ENCODE measurements at regions of chr13 and their contacts with region 1.

Region 1: DNA sequence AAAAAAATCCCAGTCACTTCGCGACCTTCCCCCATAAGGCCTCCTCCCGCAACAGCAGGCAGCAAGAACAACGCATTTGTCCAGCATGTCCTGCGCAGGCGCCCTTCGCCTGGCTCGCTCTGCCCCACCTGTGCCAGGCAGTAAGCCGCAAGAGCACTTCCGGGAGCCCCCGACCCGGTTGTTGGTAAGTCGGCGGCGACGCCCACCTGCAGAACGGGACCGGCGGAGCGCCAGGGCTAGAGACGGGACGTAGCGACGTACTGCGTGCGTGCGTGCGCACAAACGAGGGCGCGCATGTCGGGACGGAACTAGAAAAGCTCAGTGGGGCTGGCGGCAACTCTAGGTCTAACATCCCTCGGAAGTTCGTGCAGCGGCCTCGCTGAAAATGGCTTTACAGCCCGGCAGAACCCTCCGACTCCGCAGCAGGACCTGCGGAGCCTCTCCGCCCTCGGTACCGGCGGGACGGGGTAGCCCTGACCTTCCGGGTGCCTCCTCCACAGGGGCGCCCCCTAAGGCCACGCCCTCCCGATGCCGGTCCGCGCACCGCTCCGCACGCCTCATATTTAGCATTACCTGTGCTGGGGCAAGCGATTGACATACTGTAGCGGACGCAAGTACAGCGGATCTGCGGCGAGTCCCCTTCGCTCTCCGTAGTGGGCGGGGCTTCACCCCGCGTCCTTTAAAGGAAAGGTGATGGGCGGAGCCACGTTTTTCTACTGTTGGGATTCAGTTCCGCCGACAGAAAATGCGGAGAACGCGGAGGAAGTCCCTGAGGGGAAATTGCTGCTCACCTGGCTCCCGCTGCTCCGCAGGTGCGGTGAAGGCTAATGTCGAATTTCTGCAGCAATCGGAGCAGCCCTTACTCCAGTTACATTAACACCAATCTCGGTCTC is at the start of gene MTIF3:
- DNase-seq: peak; percentile 90
- ATAC-seq: peak; percentile 96
- H3K4me3 ChIP-seq: peak within 1 kb of the TSS; percentile 74
- H3K27ac ChIP-seq: peak within 1 kb of the TSS; percentile 89
- H3K4me1 ChIP-seq: peaks cover 4% of the 10 kb centered on the region
- H3K27me3 ChIP-seq: no peaks in the 10 kb centered on the region
- CTCF ChIP-seq: no peak
- POLR2A ChIP-seq: peak; percentile 56
- RAD21 ChIP-seq: no peak
- total RNA-seq, gene MTIF3: 31.7 and 60.8 TPM in 2 replicates

Region 2: GRCh38 chr13:27424246-27425157 is 25.7 kb before region 1 on chr13 and contains the start of gene GTF3A:
- CTCF ChIA-PET with region 1: interaction called, 3 read pairs
- POLR2A ChIA-PET with region 1: no interaction called
- dilution Hi-C with region 1: no loop called
- in situ Hi-C with region 1: no loop called
- intact Hi-C with region 1: loop called (anchors 1 kb)
- DNase-seq: peak; percentile 82
- ATAC-seq: peak; percentile 92
- H3K4me3 ChIP-seq: peak within 1 kb of the TSS; percentile 57
- H3K27ac ChIP-seq: peak within 1 kb of the TSS; percentile 81
- H3K4me1 ChIP-seq: peaks cover 15% of the 10 kb centered on the region
- H3K27me3 ChIP-seq: peaks cover 2% of the 10 kb centered on the region; the same call in 1 of the 2 replicates
- CTCF ChIP-seq: no peak
- POLR2A ChIP-seq: peak; percentile 51; the same call in 1 of the 2 replicates
- RAD21 ChIP-seq: no peak
- total RNA-seq, gene GTF3A: 116 and 148 TPM in 2 replicates

Region 3: DNA sequence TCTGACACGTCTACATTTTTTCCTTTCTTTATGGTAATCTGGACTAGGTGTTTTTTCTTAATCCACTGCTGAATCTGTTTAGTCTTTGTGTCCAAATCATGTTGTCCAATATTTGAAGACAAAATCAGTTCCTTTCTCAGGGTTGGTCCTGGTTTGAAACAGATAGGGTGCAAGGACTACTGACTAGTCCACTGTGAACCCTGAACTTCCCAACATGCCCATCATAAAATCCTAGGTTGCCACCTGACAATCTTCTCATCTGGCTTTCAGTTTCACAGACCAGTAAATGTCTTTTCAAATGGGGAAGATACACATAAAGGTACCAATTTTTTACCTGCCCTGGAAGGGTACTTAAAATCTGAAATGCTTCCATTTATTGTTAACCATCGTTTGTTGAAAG is 13.1 kb before region 1 on chr13:
- CTCF ChIA-PET with region 1: no interaction called
- POLR2A ChIA-PET with region 1: no interaction called
- dilution Hi-C with region 1: no loop called
- in situ Hi-C with region 1: no loop called
- intact Hi-C with region 1: no loop called
- DNase-seq: no peak
- ATAC-seq: no peak
- H3K4me3 ChIP-seq: no peak overlapping the region
- H3K27ac ChIP-seq: no peak overlapping the region
- H3K4me1 ChIP-seq: no peaks in the 10 kb centered on the region
- H3K27me3 ChIP-seq: no peaks in the 10 kb centered on the region
- CTCF ChIP-seq: no peak
- POLR2A ChIP-seq: no peak
- RAD21 ChIP-seq: no peak

Region 4: DNA sequence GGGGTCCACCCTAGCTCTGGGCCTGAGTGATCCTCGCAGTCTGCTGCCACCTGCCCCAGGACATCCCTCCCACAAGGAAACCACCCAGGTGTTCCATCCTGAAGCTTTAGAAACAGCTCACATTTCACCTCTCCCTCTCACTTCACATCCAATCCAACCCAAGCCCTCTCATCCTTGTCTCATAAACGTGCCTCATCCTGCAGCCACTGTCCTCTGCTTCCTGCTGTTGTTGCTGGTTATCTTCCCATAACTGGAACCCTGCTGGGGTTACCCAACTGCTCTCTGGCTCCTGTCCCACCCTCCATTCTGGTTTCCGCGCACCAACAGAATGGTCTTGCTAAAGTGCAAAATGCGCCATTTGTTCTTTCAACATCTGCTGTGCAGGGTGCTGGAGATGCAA is 59.9 kb after region 1 on chr13:
- CTCF ChIA-PET with region 1: no interaction called
- POLR2A ChIA-PET with region 1: no interaction called
- dilution Hi-C with region 1: no loop called
- in situ Hi-C with region 1: loop called (anchors 10 kb)
- intact Hi-C with region 1: no loop called
- DNase-seq: no peak
- ATAC-seq: no peak
- H3K4me3 ChIP-seq: no peak overlapping the region
- H3K27ac ChIP-seq: no peak overlapping the region
- H3K4me1 ChIP-seq: no peaks in the 10 kb centered on the region
- H3K27me3 ChIP-seq: peaks cover 5% of the 10 kb centered on the region; the same call in 1 of the 2 replicates
- CTCF ChIP-seq: no peak
- POLR2A ChIP-seq: no peak
- RAD21 ChIP-seq: no peak

Region 5: GRCh38 chr13:27933580-27934328 is 483.6 kb after region 1 on chr13:
- CTCF ChIA-PET with region 1: no interaction called
- POLR2A ChIA-PET with region 1: interaction called, 15 read pairs
- dilution Hi-C with region 1: no loop called
- in situ Hi-C with region 1: no loop called
- intact Hi-C with region 1: no loop called
- DNase-seq: no peak
- ATAC-seq: no peak
- H3K4me3 ChIP-seq: no peak overlapping the region
- H3K27ac ChIP-seq: no peak overlapping the region
- H3K4me1 ChIP-seq: no peaks in the 10 kb centered on the region
- H3K27me3 ChIP-seq: peaks cover 28% of the 10 kb centered on the region
- CTCF ChIP-seq: no peak
- POLR2A ChIP-seq: no peak
- RAD21 ChIP-seq: no peak

Region 6: DNA sequence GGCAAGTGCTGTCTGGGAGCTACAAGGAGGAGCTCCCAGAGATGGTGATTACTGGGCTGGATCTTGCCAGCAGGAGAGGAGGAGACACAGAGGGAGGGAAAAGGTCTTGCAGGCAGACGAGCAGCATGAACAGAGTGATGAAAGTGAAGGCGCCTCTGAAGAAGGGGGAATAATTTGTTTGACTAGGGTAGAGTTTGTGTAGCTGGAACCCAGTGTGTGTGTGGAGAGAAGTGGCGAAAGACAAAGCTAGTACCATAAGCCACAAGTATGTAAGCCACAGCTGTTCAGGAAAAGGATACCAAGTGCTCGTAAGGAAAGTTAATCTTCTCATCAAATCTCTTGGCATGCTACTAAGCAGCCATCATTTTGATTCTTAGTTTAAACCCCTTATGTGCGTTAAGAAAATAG is 1039.3 kb after region 1 on chr13:
- CTCF ChIA-PET with region 1: no interaction called
- POLR2A ChIA-PET with region 1: no interaction called
- dilution Hi-C with region 1: no loop called
- in situ Hi-C with region 1: no loop called
- intact Hi-C with region 1: no loop called
- DNase-seq: peak; percentile 45
- ATAC-seq: peak; percentile 24; the same call in 1 of the 2 replicates
- H3K4me3 ChIP-seq: no peak overlapping the region
- H3K27ac ChIP-seq: no peak overlapping the region
- H3K4me1 ChIP-seq: peaks cover 7% of the 10 kb centered on the region
- H3K27me3 ChIP-seq: peaks cover 10% of the 10 kb centered on the region; the same call in 1 of the 2 replicates
- CTCF ChIP-seq: no peak
- POLR2A ChIP-seq: no peak
- RAD21 ChIP-seq: no peak

Measured in IMR-90 (cell line).